PC-3 (cell line): ENCODE measurements at regions of chr14 and their contacts with region 1.

Region 1: GRCh38 chr14:68862954-68863594 is 70.2 kb upstream of the ZFP36L1 start:
- DNase-seq: peak; percentile 91
- ATAC-seq: peak; percentile 84
- H3K4me3 ChIP-seq: no peak overlapping the region
- H3K27ac ChIP-seq: no peak overlapping the region
- H3K4me1 ChIP-seq: no peaks in the 10 kb centered on the region
- H3K27me3 ChIP-seq: no peaks in the 10 kb centered on the region
- CTCF ChIP-seq: peak; percentile 91

Region 2: DNA sequence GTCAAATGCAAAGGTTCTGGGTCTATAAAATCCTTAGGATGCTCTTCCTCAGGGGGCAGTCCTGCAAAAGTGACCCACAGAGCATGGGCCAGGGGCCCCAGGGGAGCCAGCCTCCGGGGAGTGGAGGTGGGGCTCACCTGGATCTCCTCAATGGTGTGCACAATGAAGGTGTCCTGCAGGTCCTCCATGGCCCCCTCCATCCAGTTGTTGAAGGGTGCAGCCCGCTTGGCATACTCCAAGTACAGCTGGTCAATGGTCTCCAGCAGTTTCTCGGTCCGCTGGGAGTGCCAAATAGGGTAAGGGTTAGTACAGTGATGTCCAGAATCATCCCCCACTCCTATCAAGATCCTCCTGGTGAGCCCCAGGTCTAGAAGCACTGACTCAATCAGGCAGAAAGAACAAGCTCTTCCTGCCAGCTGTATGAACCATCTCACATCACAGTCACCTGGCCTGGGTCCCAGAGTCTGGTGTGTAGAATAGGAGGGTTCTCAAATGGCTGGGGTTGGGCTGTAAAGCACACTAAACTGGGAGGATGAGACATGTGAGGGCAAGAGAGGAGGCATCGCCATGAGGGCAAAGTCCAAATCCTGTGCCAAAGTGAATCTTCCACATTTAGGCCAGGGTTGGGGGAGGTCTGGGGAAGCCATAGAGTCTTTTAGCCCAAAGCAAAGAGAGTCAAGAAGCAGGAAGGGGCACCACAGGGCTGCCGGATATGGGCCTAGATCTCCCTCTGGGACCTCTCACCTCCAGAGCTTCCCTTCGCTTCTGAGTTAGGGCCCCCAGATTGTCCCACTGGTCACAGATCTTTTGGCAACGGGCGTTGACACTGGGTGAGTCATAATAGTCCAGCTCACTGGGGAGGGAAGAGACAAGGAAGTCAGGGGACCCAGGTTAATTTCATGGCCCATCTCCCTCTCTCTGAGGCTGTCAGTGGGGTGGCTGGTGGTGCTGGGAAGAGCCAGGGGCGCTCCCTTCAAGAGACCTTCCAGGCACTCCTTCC is 21.3 kb after region 1 on chr14:
- CTCF ChIA-PET with region 1: interaction called, 12 read pairs
- POLR2A ChIA-PET with region 1: no interaction called
- intact Hi-C with region 1: no loop called
- DNase-seq: peak; percentile 97
- ATAC-seq: peak; percentile 95
- H3K4me3 ChIP-seq: no peak overlapping the region
- H3K27ac ChIP-seq: peak overlapping the region; percentile 94
- H3K4me1 ChIP-seq: peaks cover 25% of the 10 kb centered on the region
- H3K27me3 ChIP-seq: no peaks in the 10 kb centered on the region
- CTCF ChIP-seq: no peak

Region 3: DNA sequence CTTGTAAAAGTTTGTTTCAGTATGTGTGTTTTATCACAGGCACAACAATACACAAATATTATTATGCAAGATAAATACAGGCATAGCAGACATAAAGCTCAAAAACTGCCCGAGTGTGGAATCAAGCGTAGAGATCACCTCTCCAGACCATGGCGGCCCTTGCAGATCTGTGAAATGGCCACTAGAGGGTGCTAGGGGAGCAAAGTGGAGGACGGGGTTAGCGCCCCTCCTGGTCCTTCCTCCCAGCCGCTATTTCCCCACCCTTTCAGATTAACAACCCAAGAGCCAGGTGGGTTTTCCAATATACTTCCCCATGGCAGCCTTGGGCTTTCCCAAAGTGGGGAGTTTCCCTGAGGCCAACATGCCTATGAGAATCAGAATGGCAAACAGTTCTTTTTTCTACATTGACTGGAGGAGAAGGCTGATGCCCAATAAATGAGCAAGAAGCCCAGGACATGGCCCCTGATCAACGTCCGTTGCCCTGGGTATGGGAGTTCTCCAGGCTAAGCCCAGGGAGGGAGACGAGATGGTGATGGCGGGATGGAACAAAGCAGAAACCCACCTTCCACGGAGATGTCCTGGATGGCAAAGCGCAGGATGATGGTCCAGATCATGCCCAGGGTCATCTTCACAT is 48.6 kb after region 1 on chr14:
- CTCF ChIA-PET with region 1: no interaction called
- POLR2A ChIA-PET with region 1: no interaction called
- intact Hi-C with region 1: loop called (anchors 1 kb)
- DNase-seq: peak; percentile 91
- ATAC-seq: peak; percentile 91
- H3K4me3 ChIP-seq: no peak overlapping the region
- H3K27ac ChIP-seq: no peak overlapping the region
- H3K4me1 ChIP-seq: no peaks in the 10 kb centered on the region
- H3K27me3 ChIP-seq: no peaks in the 10 kb centered on the region
- CTCF ChIP-seq: peak; percentile 99

Region 4: GRCh38 chr14:68939893-68940613 is 77.0 kb after region 1 on chr14:
- CTCF ChIA-PET with region 1: no interaction called
- POLR2A ChIA-PET with region 1: no interaction called
- intact Hi-C with region 1: no loop called
- DNase-seq: peak; percentile 68
- ATAC-seq: peak; percentile 53
- H3K4me3 ChIP-seq: no peak overlapping the region
- H3K27ac ChIP-seq: no peak overlapping the region
- H3K4me1 ChIP-seq: peaks cover 44% of the 10 kb centered on the region
- H3K27me3 ChIP-seq: no peaks in the 10 kb centered on the region
- CTCF ChIP-seq: no peak

Region 5: GRCh38 chr14:69005432-69006147 is 142.5 kb after region 1 on chr14:
- CTCF ChIA-PET with region 1: no interaction called
- POLR2A ChIA-PET with region 1: no interaction called
- intact Hi-C with region 1: loop called (anchors 1 kb)
- DNase-seq: peak; percentile 91
- ATAC-seq: peak; percentile 90
- H3K4me3 ChIP-seq: peak overlapping the region; percentile 30; the same call in 1 of the 2 replicates
- H3K27ac ChIP-seq: peak overlapping the region; percentile 43
- H3K4me1 ChIP-seq: peaks cover 30% of the 10 kb centered on the region
- H3K27me3 ChIP-seq: no peaks in the 10 kb centered on the region
- CTCF ChIP-seq: no peak

Region 6: DNA sequence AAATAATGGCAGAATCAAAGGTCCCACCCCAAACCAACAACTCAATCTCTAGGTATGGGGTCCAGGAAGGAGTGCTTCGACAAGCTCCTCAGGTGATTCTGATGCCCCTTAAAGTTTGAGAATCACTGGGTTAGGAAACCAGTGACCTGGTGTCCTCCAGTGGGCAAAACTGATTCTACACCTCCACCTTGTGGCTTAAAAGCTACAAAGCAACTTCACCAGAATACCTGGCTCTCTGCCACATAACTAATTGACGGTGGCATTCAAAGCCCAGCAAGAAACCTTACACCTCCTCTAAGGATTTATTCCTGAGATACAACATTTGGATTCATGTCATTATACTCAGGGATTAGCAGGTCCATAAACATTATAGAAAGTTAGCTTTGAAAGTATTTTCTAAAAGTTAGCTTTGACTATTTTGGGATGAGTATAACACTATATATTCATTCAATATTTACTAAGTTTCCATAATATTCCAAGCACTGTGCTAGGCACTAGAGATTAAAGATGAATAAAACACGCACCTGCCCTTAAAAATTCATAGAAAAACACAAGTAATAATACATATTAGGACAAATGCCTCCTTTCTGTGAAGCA is 244.4 kb after region 1 on chr14:
- CTCF ChIA-PET with region 1: interaction called, 6 read pairs
- POLR2A ChIA-PET with region 1: no interaction called
- intact Hi-C with region 1: loop called (anchors 1 kb)
- DNase-seq: peak; percentile 85
- ATAC-seq: peak; percentile 67
- H3K4me3 ChIP-seq: no peak overlapping the region
- H3K27ac ChIP-seq: no peak overlapping the region
- H3K4me1 ChIP-seq: no peaks in the 10 kb centered on the region
- H3K27me3 ChIP-seq: no peaks in the 10 kb centered on the region
- CTCF ChIP-seq: peak; percentile 94

Region 7: GRCh38 chr14:69460093-69460701 is 597.1 kb after region 1 on chr14:
- CTCF ChIA-PET with region 1: no interaction called
- POLR2A ChIA-PET with region 1: no interaction called
- intact Hi-C with region 1: loop called (anchors 10 kb)
- DNase-seq: peak; percentile 91
- ATAC-seq: peak; percentile 46
- H3K4me3 ChIP-seq: no peak overlapping the region
- H3K27ac ChIP-seq: no peak overlapping the region
- H3K4me1 ChIP-seq: peaks cover 11% of the 10 kb centered on the region
- H3K27me3 ChIP-seq: no peaks in the 10 kb centered on the region
- CTCF ChIP-seq: peak; percentile 94